Activated T-helper 1 cell treated with anti-CD3 and anti-CD28 coated beads, Interleukin-12 subunit alpha, Interleukin-12 subunit beta, Interleukin-2, Interleukin-4 antibody, amounts not matched to agents 30 ng/mL and 10 ng/mL and 1 ng/mL, durations not matched to agents 14 hours and 24 hours and 36 hours (primary cell): ENCODE measurements at regions of chr5 and their contacts with region 1.

Region 1: DNA sequence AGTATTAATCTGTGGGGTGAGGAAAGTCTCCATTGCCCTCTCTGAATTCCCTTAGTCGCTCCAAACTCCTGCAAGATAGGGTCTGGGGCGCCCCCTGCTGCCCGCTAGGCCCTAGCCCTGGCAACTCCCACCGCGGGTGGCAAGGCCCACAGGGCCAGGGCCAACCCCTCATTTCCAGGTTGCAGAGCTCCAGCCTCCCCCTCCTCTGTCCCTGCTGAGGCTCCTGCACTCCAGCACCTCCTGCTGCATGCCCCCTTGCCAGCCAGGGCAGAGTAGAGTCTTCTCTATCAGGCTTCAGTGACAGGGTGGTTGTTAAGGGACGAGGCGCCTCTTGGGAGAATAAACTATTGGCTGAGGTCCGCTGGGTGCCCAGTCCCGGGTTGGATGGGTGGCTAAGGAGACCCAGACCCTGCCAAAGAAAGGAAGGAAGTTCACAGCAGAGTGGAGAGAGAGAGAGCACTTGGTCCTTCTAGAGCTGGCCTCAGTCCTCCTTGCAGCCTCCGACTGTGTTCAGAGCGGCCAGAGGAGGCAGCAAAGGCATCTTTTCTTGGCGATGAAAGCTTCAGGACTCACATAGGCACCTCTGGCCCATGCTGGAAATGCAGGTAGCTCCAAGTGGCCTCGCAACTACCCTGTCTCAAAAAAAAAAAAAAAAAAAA is 45.6 kb downstream of the SAR1B start:
- DNase-seq: peak; percentile 72
- H3K4me3 Mint-ChIP-seq: no peak overlapping the region
- H3K27ac Mint-ChIP-seq: peak overlapping the region; percentile 52
- H3K4me1 Mint-ChIP-seq: peaks cover 14% of the 10 kb centered on the region
- H3K27me3 Mint-ChIP-seq: no peaks in the 10 kb centered on the region

Region 2: DNA sequence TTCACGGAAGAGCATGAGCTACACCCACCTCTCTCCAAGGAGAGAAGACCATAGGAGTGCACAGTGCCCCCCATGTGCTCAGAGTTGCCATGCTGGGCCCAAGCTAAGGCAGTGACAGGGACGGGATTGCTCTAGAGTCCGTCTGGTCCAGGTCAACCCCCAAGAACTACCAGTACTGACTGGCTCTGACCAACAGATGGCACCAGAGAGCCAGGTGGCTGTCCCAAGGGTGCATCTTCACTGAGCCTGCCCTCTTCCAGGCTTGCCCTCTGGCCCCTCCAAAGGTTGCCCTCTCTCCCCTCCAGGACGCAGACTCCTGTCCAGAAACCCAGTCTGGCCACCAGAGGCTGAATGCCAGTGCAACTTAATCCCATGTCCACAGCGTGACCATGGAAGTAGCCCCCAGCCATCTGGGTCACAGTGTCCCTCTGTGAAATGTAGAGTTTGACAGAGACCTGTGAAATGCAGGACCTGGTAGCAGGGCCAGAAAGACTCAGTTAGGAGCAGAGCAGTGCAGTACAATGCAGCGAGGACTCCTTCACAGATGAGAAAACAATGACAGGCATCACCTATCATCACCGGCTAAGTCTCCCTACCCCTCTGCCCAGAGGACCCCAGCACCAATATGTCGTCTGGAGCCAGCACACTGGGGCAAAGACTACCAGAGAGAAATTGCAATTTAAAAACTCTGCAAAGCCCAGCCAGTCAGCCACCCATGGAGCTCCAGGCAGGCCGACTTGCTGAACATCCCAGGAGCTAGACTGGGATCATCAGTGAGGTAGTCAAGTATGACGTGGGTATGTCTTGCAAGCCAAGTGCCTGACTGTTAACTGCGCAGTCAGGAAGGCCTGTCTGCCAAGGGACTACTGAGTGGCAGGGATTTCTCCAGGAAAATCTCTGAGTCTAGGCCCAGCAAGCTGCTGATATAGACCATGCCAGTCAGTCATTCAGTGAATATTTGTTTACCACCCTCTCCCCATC is 402.6 kb before region 1 on chr5:
- intact Hi-C with region 1: loop called (anchors 2 kb)
- DNase-seq: peak; percentile 67
- H3K4me3 Mint-ChIP-seq: no peak overlapping the region
- H3K27ac Mint-ChIP-seq: no peak overlapping the region
- H3K4me1 Mint-ChIP-seq: no peaks in the 10 kb centered on the region
- H3K27me3 Mint-ChIP-seq: peaks cover 8% of the 10 kb centered on the region

Region 3: GRCh38 chr5:134304311-134304710 is 282.7 kb before region 1 on chr5:
- intact Hi-C with region 1: loop called (anchors 1 kb)
- DNase-seq: no peak
- H3K4me3 Mint-ChIP-seq: no peak overlapping the region
- H3K27ac Mint-ChIP-seq: no peak overlapping the region
- H3K4me1 Mint-ChIP-seq: no peaks in the 10 kb centered on the region
- H3K27me3 Mint-ChIP-seq: peaks cover 2% of the 10 kb centered on the region

Region 4: DNA sequence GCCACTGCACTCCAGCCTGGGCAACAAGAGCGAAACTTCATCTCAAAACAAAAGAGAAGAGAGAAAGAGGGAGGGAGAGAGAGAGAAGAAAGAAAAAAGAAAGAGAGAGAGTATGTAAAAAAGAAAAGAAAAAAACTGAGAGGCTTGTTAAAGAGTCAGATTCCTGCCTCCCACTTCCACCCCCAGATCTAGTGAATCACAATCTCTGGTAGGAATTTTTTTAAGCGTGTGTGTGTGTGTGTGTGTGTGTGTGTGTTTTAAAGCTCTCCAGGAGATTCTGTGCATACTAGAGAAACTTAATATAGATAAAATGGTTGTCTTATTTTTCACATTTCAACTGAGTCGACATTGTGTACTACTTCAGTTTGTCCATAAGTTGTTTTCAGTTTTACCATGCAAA is 13.6 kb after region 1 on chr5:
- intact Hi-C with region 1: no loop called
- DNase-seq: no peak
- H3K4me3 Mint-ChIP-seq: no peak overlapping the region
- H3K27ac Mint-ChIP-seq: no peak overlapping the region
- H3K4me1 Mint-ChIP-seq: peaks cover 37% of the 10 kb centered on the region
- H3K27me3 Mint-ChIP-seq: no peaks in the 10 kb centered on the region

Region 5: DNA sequence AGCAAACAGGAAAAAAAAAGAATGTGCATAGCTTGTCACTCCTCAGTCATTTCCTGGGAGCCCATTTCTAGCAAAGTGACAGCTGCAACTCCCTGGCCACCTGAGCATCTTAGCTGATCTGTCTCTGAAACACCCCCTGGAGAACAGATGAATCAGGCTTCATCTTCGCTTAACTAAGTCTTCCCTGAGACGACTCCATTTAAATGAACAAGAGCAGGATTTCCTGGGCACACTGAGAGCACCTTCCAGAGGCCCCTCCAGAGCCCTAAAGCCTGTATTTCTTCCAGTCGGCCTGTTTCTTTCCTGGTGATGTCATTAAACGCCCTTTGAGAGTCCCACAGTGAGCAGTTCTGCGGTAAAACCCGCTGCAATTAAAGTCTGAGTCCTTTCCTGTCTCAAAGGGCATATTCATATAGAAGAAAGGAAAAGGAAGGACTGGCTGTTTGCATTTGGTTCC is 1455.7 kb after region 1 on chr5:
- intact Hi-C with region 1: no loop called
- DNase-seq: no peak
- H3K4me3 Mint-ChIP-seq: no peak overlapping the region
- H3K27ac Mint-ChIP-seq: no peak overlapping the region
- H3K4me1 Mint-ChIP-seq: peaks cover 2% of the 10 kb centered on the region
- H3K27me3 Mint-ChIP-seq: no peaks in the 10 kb centered on the region